SK-N-SH (cell line): ENCODE measurements at regions of chr6 and their contacts with region 1.

Region 1: GRCh38 chr6:36623547-36624459 is 29.6 kb downstream of the SRSF3 start:
- DNase-seq: peak; percentile 83
- H3K4me3 ChIP-seq: no peak overlapping the region; a peak in 1 of 4 replicates
- H3K27ac ChIP-seq: no peak overlapping the region
- H3K4me1 ChIP-seq: peaks cover 0 to 11% of the 10 kb centered on the region in 2 experiments; a peak in 2 of 4 replicates
- H3K27me3 ChIP-seq: no peaks in the 10 kb centered on the region
- CTCF ChIP-seq: peak; percentile 88
- EP300 ChIP-seq: peak in 1 of 2 experiments; percentile 55; a peak in 1 of 4 replicates
- RAD21 ChIP-seq: peak; percentile 94

Region 2: GRCh38 chr6:36642913-36643817 is 19.4 kb after region 1 on chr6:
- CTCF ChIA-PET with region 1: interaction called, 13 read pairs
- POLR2A ChIA-PET with region 1: no interaction called
- DNase-seq: no peak
- H3K4me3 ChIP-seq: no peak overlapping the region
- H3K27ac ChIP-seq: peak overlapping the region in 1 of 2 experiments; percentile 59; a peak in 3 of 4 replicates
- H3K4me1 ChIP-seq: peaks cover 6 to 16% of the 10 kb centered on the region in 2 experiments
- H3K27me3 ChIP-seq: no peaks in the 10 kb centered on the region
- CTCF ChIP-seq: no peak
- EP300 ChIP-seq: no peak
- RAD21 ChIP-seq: no peak